ENCODE measurements at regions of chr21 and their contacts with region 1.

Region 1: DNA sequence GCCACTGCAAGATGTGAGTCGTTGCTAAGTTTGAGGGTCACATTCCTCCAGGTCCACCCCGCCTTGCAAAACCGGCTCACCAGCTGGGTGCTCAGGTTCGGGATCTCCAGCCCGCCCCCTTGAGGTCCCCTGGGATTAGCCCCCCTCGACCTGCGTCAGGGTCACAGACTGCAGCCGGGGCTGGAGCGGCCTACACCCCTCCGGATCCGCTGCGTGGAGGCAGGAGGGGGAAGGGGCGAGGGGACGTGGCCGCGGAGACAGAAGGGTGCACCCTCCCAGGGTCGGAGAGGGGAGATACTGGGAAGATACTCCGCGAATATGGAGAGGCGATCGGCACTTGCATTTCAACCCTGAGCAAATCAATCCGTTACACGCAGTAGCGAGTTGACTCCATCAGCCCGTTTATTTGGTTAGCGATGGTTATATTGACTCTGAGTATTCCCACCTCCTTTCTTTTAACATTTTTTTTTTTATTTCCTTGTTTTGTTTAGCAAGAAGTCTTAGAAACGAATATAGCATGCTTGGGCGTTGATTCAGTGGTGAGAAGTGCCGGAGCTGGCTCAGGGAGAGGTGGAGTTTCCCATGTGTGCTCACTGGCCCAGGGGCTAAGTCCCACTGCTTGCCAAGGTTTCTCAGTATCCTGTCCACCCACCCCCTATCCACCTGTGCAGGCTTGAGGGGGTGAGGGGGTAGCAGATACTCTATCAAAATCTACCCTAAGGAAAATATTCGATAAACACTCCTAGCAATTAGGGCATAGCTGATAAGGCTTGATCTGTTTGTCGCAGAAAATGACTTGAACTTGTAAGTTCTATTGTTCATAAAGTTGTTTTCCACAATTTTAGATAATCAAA is 1.0 kb downstream of the IFNAR2 start:
- DNase-seq: peak; percentile 48
- H3K4me3 Mint-ChIP-seq: peak overlapping the region; percentile 90
- H3K27ac Mint-ChIP-seq: peak overlapping the region; percentile 91
- H3K4me1 Mint-ChIP-seq: peaks cover 54% of the 10 kb centered on the region
- H3K27me3 Mint-ChIP-seq: no peaks in the 10 kb centered on the region

Region 2: DNA sequence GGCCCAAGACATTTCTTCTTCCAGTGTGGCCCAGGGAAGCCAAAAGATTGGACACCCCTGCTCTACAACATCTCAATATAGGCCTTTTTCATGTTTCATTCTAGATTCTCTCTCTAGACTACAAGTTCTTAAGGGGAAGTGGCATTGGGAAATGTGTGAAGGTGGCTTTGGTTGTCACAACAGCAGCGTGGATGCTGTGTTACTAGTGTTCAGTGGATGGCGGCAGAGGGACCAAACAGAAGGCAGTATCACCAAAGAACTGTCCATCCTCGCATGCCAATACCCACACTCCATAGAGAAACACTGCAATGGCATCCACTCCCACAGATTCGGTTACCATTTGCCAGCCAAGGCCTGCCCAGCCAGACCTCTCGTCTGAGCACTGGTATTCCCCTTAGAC is 25.3 kb before region 1 on chr21:
- CTCF ChIA-PET with region 1: interaction called, 3 read pairs
- POLR2A ChIA-PET with region 1: no interaction called
- intact Hi-C with region 1: loop called (anchors 1 kb)
- DNase-seq: peak; percentile 36
- H3K4me3 Mint-ChIP-seq: peak overlapping the region; percentile 63
- H3K27ac Mint-ChIP-seq: peak overlapping the region; percentile 88
- H3K4me1 Mint-ChIP-seq: peaks cover 34% of the 10 kb centered on the region
- H3K27me3 Mint-ChIP-seq: no peaks in the 10 kb centered on the region

Region 3: DNA sequence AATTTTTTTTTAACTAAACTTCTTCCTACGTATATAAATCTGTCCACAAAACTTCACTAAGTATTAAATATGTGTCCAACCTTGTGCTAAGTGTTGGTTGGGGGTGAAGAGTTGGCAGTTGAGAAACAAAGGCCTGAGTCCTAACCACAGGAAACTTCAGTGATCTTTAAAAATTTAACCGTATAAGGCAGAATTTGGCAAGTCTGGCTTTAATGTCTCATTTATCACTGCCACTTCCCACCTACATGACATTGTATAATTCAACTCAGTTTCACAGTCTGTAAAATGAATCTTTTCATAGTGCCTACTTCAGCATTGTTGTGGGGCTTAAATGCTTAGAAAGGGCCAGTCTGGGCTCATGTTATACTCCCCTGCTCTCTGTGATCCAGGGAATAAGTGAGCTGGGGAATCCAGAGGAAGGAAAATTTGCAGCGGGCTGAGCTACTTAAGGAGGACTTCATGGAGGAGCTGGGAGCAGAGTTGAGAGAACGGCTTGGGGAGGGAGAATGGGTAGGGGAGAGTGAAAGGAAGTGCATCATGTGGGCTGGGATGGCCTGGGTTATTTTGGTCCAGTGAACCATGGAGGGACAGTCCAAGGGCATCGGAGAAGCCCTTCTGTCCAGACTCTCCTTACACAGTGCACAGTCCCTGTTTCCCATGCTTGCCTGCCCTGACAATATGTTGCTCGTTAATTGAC is 13.5 kb after region 1 on chr21:
- CTCF ChIA-PET with region 1: interaction called, 3 read pairs
- POLR2A ChIA-PET with region 1: interaction called, 3 read pairs
- intact Hi-C with region 1: loop called (anchors 1 kb)
- DNase-seq: no peak
- H3K4me3 Mint-ChIP-seq: peak overlapping the region; percentile 34
- H3K27ac Mint-ChIP-seq: peak overlapping the region; percentile 89
- H3K4me1 Mint-ChIP-seq: peaks cover 82% of the 10 kb centered on the region
- H3K27me3 Mint-ChIP-seq: no peaks in the 10 kb centered on the region

Region 4: GRCh38 chr21:33256019-33256418 is 25.2 kb after region 1 on chr21:
- CTCF ChIA-PET with region 1: interaction called, 3 read pairs
- POLR2A ChIA-PET with region 1: interaction called, 6 read pairs
- intact Hi-C with region 1: loop called (anchors 1 kb)
- DNase-seq: peak; percentile 49
- H3K4me3 Mint-ChIP-seq: peak overlapping the region; percentile 8
- H3K27ac Mint-ChIP-seq: peak overlapping the region; percentile 71
- H3K4me1 Mint-ChIP-seq: peaks cover 65% of the 10 kb centered on the region
- H3K27me3 Mint-ChIP-seq: no peaks in the 10 kb centered on the region

Measured in activated CD4-positive, alpha-beta memory T cell treated with anti-CD3 and anti-CD28 coated beads for 36 hours (primary cell).